Gastrocnemius medialis (tissue), 4 donors: ENCODE measurements at regions of chr11 and their contacts with region 1.

Region 1: DNA sequence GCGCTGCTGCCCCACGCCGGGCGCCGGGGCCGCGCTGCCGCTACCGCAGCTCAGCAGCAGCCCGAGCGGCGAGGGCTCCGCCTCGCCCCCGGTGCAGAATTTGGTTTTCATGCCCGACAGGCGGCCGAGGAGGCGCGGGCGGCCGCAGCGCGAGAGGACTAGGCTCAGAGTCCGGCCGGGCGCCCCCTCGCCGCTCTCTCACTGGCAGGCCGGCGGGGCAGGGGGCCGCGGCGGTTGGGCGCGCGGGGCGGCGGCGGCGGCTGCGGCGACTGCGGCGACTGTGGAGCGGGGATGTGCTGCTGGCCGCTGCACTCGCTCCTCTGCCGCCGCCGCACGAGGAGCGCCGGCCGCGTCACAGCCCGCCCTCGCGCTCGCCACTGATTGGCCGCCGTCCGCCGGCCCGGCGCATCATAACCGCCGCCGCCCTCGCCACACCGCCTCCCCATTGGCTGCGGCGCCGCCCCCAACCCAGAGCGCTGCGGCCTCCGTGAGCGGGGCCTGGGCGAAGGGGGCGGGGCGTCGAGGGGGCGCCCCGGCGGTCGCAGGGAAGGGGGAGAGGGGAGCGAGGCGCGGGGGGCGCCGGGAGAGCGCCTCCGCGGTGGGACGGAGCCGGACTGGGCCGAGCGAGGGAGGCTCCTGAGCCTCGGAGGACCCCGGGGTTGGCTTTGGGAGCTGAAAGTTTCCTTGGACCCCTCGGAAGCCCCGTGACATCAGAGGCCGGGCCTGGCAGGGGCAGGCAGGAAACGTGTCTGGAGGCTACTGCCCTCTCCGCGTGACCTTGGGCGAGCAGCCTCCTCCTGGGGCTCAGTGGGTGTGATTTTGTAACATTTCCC is at the start of gene CHKA:
- DNase-seq: peak; percentile 88 to 91
- ATAC-seq: peak; percentile 85
- H3K4me3 ChIP-seq: peak within 1 kb of the TSS; percentile 59 to 71 (median 63)
- H3K27ac ChIP-seq: peak within 1 kb of the TSS; percentile 92 to 99 (median 94)
- H3K4me1 ChIP-seq: peaks cover 6 to 26% of the 10 kb centered on the region in 2 donors
- H3K27me3 ChIP-seq: no peaks in the 10 kb centered on the region
- CTCF ChIP-seq: no peak
- POLR2A ChIP-seq: peak; percentile 97 to 99
- total RNA-seq, gene CHKA: 7.3 to 20.9 (median 12.3) TPM

Region 2: GRCh38 chr11:68010090-68011041 is 110.9 kb before region 1 on chr11 and contains the start of gene ALDH3B1:
- in situ Hi-C with region 1: no loop called
- intact Hi-C with region 1: loop called (anchors 1 kb)
- DNase-seq: peak; percentile 71 to 92
- ATAC-seq: peak; percentile 77 to 86
- H3K4me3 ChIP-seq: peak within 1 kb of the TSS; percentile 12 to 39 (median 34)
- H3K27ac ChIP-seq: peak within 1 kb of the TSS; percentile 73 to 79 (median 76)
- H3K4me1 ChIP-seq: peaks cover 7 to 18% of the 10 kb centered on the region in 2 donors
- H3K27me3 ChIP-seq: no peaks in the 10 kb centered on the region
- CTCF ChIP-seq: no peak
- POLR2A ChIP-seq: peak in 1 of 2 donors; percentile 49
- total RNA-seq, gene ALDH3B1: 2.2 to 5.1 (median 3.6) TPM

Region 3: GRCh38 chr11:68030318-68031138 is 90.8 kb before region 1 on chr11 and contains the start of gene NDUFS8:
- in situ Hi-C with region 1: no loop called
- intact Hi-C with region 1: loop called (anchors 1 kb)
- DNase-seq: peak; percentile 96 to 98
- ATAC-seq: peak; percentile 96 to 99
- H3K4me3 ChIP-seq: peak within 1 kb of the TSS; percentile 71 to 93 (median 86)
- H3K27ac ChIP-seq: peak within 1 kb of the TSS; percentile 90 to 97 (median 92)
- H3K4me1 ChIP-seq: peaks cover 27 to 38% of the 10 kb centered on the region in 2 donors
- H3K27me3 ChIP-seq: no peaks in the 10 kb centered on the region
- CTCF ChIP-seq: no peak
- POLR2A ChIP-seq: peak; percentile 49 to 68
- total RNA-seq, gene NDUFS8: 242 to 432 (median 307) TPM

Region 4: GRCh38 chr11:68038718-68039525 is 82.4 kb before region 1 on chr11 and contains the start of gene TCIRG1:
- in situ Hi-C with region 1: no loop called
- intact Hi-C with region 1: loop called (anchors 2 kb)
- DNase-seq: peak; percentile 65 to 83
- ATAC-seq: peak; percentile 68 to 74
- H3K4me3 ChIP-seq: peak within 1 kb of the TSS; percentile 62 to 69 (median 65)
- H3K27ac ChIP-seq: peak within 1 kb of the TSS; percentile 74 to 88 (median 76)
- H3K4me1 ChIP-seq: peaks cover 14 to 32% of the 10 kb centered on the region in 2 donors
- H3K27me3 ChIP-seq: no peaks in the 10 kb centered on the region
- CTCF ChIP-seq: peak in 3 of 5 experiments; percentile 4 to 36 (median 23)
- POLR2A ChIP-seq: peak; percentile 88 to 93
- total RNA-seq, gene TCIRG1: 13.4 to 24.5 (median 14.1) TPM

Region 5: GRCh38 chr11:68213555-68214174 is 92.4 kb after region 1 on chr11:
- in situ Hi-C with region 1: no loop called
- intact Hi-C with region 1: loop called (anchors 2 kb)
- DNase-seq: peak; percentile 81 to 87
- ATAC-seq: peak; percentile 33 to 37
- H3K4me3 ChIP-seq: peak overlapping the region; percentile 69 to 99 (median 91)
- H3K27ac ChIP-seq: peak overlapping the region; percentile 89 to 100 (median 96)
- H3K4me1 ChIP-seq: peaks cover 41 to 42% of the 10 kb centered on the region in 2 donors
- H3K27me3 ChIP-seq: no peaks in the 10 kb centered on the region
- CTCF ChIP-seq: peak in 4 of 5 experiments; percentile 12 to 68 (median 38)
- POLR2A ChIP-seq: peak; percentile 79 to 90

Region 6: DNA sequence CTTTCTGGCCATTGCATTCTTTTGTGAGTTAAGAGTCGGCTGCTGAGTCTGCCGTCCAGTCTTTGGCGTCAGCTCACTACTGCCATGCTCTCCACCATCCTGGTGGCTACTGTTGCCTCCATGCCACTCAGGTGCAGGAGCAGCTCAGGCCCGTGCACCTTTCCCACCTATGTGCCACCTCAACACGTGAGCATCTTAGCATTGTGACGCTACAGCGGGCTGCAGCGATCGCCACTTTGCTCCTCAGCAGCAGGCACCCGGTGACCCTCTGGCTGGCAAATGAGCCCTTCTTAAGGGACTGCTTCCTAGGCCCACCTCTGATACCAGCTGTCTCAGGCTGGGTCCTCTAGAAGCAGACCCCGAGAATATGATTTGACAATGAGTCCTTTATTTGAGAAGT is 103.3 kb after region 1 on chr11:
- in situ Hi-C with region 1: no loop called
- intact Hi-C with region 1: no loop called
- DNase-seq: no peak
- ATAC-seq: no peak
- H3K4me3 ChIP-seq: no peak overlapping the region
- H3K27ac ChIP-seq: no peak overlapping the region
- H3K4me1 ChIP-seq: no peaks in the 10 kb centered on the region
- H3K27me3 ChIP-seq: no peaks in the 10 kb centered on the region
- CTCF ChIP-seq: no peak
- POLR2A ChIP-seq: no peak

Region 7: GRCh38 chr11:68271781-68272608 is 150.7 kb after region 1 on chr11 and contains the start of gene C11orf24:
- in situ Hi-C with region 1: no loop called
- intact Hi-C with region 1: loop called (anchors 5 kb)
- DNase-seq: peak; percentile 92 to 94
- ATAC-seq: peak; percentile 92 to 94
- H3K4me3 ChIP-seq: peak within 1 kb of the TSS; percentile 66 to 89 (median 75)
- H3K27ac ChIP-seq: peak within 1 kb of the TSS; percentile 88 to 97 (median 92)
- H3K4me1 ChIP-seq: peaks cover 21 to 31% of the 10 kb centered on the region in 2 donors
- H3K27me3 ChIP-seq: no peaks in the 10 kb centered on the region
- CTCF ChIP-seq: peak in 1 of 5 experiments; percentile 7
- POLR2A ChIP-seq: peak; percentile 77 to 80
- total RNA-seq, gene C11orf24: 8.1 to 19.3 (median 10.6) TPM